ENCODE measurements at regions of chr17 and their contacts with region 1.

Region 1: DNA sequence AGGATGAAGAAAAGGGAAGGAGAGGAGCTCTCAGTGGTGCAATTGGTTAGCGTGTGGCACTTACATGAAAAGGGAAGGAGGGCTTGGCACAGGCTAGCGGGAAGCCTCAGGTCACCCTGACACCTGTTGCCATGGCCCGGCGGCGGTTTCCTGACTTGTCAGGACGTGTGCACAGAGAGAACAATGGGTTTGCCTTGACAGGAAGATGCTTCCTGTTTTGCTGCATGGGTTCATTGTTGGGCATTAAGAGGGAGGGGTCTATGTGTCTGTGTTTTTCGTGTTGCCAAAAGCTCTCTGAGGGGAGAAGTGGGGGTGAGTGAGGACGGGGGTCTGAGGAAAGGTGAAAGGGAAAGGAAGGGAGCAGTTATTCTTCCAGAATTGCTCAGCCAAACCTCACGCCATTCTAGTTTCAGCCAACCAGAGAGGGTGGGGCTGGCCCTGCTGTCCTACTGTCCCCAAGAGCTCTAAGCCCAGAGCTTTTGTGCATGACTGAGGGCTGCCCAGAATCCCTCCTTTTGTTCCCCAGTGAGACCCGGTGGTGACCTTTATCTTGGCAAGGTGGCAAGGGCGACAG is 17.1 kb upstream of the CCR7 start:
- DNase-seq: peak; percentile 81
- H3K4me3 ChIP-seq: no peak overlapping the region
- H3K27ac ChIP-seq: peak overlapping the region; percentile 15
- H3K4me1 ChIP-seq: peaks cover 13% of the 10 kb centered on the region
- H3K27me3 ChIP-seq: no peaks in the 10 kb centered on the region
- CTCF ChIP-seq: no peak

Region 2: GRCh38 chr17:40678902-40679522 is 96.6 kb after region 1 on chr17:
- CTCF ChIA-PET with region 1: no interaction called
- dilution Hi-C with region 1: loop called (anchors 5 kb)
- in situ Hi-C with region 1: no loop called
- intact Hi-C with region 1: no loop called
- DNase-seq: peak; percentile 9
- H3K4me3 ChIP-seq: no peak overlapping the region
- H3K27ac ChIP-seq: no peak overlapping the region
- H3K4me1 ChIP-seq: no peaks in the 10 kb centered on the region
- H3K27me3 ChIP-seq: peaks cover 2% of the 10 kb centered on the region
- CTCF ChIP-seq: no peak

Measured in mammary epithelial cell (primary cell).